Dendritic cell treated with granulocyte-macrophage colony-stimulating factor and Interleukin-4, amounts not matched to agents 40 ng/mL and 50 ng/mL, for 4 days (primary cell): ENCODE measurements at regions of chr4 and their contacts with region 1.

Region 1: GRCh38 chr4:110510955-110511544 is 35.1 kb downstream of the ENPEP start:
- H3K4me3 Mint-ChIP-seq: no peak overlapping the region
- H3K27ac Mint-ChIP-seq: no peak overlapping the region
- H3K4me1 Mint-ChIP-seq: peaks cover under 1% of the 10 kb centered on the region
- H3K27me3 Mint-ChIP-seq: peaks cover 10% of the 10 kb centered on the region

Region 2: GRCh38 chr4:110310795-110311194 is 200.3 kb before region 1 on chr4:
- intact Hi-C with region 1: loop called (anchors 1 kb)
- H3K4me3 Mint-ChIP-seq: no peak overlapping the region
- H3K27ac Mint-ChIP-seq: no peak overlapping the region
- H3K4me1 Mint-ChIP-seq: peaks cover 7% of the 10 kb centered on the region
- H3K27me3 Mint-ChIP-seq: peaks cover 13% of the 10 kb centered on the region

Region 3: GRCh38 chr4:110332483-110332882 is 178.6 kb before region 1 on chr4:
- intact Hi-C with region 1: no loop called
- H3K4me3 Mint-ChIP-seq: no peak overlapping the region
- H3K27ac Mint-ChIP-seq: no peak overlapping the region
- H3K4me1 Mint-ChIP-seq: no peaks in the 10 kb centered on the region
- H3K27me3 Mint-ChIP-seq: peaks cover 23% of the 10 kb centered on the region

Region 4: GRCh38 chr4:110344162-110344561 is 166.9 kb before region 1 on chr4:
- intact Hi-C with region 1: loop called (anchors 2 kb)
- H3K4me3 Mint-ChIP-seq: no peak overlapping the region
- H3K27ac Mint-ChIP-seq: no peak overlapping the region
- H3K4me1 Mint-ChIP-seq: peaks cover 20% of the 10 kb centered on the region
- H3K27me3 Mint-ChIP-seq: peaks cover 16% of the 10 kb centered on the region